ENCODE measurements at regions of chr2 and their contacts with region 1.

Region 1: DNA sequence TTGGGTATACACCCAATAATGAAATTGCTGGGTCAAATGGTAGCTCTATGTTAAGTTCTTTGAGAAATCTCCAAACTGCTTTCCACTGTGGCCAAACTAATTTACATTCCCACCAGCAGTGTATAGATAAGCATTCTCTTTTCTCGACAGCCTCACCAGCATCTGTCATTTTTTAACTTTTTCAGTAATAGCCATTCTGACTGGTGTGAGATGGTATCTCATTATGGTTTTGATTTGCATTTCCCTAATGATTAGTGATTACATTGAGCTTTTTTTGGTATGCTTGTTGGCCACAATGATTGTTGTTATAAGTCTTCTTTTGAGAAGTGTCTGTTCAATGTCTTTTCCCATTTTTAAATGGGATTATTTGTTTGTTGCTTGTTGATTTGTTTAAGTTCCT is 50.4 kb upstream of the EPAS1 start:
- DNase-seq: no peak
- ATAC-seq: no peak

Region 2: GRCh38 chr2:45743531-45744396 is 503.0 kb before region 1 on chr2:
- intact Hi-C with region 1: no loop called
- DNase-seq: peak; percentile 73
- ATAC-seq: peak; percentile 89

Region 3: DNA sequence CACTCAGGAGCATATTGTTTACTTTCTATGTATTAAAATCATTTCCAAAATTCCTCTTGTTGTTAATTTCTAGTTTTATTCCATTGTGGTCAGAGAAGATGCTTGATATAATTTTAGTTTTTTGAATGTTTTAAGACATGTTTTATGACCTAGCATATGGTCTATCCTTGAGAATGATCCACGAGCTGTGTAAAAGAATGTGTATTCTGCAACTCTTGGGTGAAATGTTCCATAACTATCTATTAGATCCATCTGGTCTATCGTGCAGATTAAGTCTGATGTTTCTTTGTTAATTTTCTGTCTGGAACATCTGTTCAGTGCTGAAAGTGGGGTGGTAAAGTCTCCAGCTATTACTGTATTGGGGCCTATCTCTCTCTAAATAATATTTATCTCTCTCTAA is 32.9 kb before region 1 on chr2:
- intact Hi-C with region 1: loop called (anchors 2 kb)
- DNase-seq: no peak
- ATAC-seq: no peak

Region 4: DNA sequence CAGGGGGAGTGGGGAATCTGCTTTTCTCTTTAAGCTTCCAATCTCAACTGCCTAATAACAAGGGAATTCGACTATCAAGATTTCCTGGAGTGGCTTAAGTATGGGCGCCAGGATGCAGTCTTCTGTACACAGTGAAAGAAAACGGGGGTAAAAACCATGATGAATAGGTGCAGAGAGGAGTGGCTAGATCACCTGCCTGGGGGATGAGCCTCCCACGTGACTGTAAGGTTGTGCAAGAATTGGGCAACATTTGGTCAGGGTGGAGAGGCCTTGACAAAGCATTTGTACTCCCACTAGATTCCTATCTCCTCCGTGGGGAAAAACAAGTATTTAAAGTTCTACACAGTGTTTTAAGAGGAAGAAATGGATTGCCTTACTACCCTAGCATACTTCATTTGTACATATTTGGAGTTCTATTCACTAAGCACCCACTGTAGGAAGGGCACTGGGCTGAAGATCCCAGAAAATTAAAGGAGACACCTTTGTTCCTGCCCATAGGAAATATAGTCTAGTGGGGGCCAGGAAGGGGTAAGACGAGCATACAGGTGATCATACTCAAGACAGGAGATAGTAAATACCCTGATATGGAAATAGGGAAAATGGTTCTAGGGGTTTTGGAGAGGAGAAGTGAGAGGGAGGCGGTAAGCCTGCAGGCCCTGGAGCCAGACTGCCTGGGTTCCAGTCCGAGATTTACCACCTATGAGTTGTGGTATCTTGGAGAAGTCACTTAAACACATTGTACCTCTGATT is 79.6 kb after region 1 on chr2:
- intact Hi-C with region 1: no loop called
- DNase-seq: no peak
- ATAC-seq: peak; percentile 11